T-cell (primary cell): ENCODE measurements at regions of chr2 and their contacts with region 1.

Region 1: GRCh38 chr2:195722075-195722474 is 65.0 kb downstream of the SLC39A10 start:
- DNase-seq: no peak
- ATAC-seq: no peak
- H3K4me3 ChIP-seq: no peak overlapping the region
- H3K4me3 Mint-ChIP-seq: no peak overlapping the region
- H3K27ac ChIP-seq: no peak overlapping the region
- H3K27ac Mint-ChIP-seq: no peak overlapping the region
- H3K4me1 ChIP-seq: no peaks in the 10 kb centered on the region
- H3K4me1 Mint-ChIP-seq: peaks cover 2 to 19% (median 3%) of the 10 kb centered on the region in 3 donors
- H3K27me3 ChIP-seq: no peaks in the 10 kb centered on the region
- H3K27me3 Mint-ChIP-seq: no peaks in the 10 kb centered on the region

Region 2: DNA sequence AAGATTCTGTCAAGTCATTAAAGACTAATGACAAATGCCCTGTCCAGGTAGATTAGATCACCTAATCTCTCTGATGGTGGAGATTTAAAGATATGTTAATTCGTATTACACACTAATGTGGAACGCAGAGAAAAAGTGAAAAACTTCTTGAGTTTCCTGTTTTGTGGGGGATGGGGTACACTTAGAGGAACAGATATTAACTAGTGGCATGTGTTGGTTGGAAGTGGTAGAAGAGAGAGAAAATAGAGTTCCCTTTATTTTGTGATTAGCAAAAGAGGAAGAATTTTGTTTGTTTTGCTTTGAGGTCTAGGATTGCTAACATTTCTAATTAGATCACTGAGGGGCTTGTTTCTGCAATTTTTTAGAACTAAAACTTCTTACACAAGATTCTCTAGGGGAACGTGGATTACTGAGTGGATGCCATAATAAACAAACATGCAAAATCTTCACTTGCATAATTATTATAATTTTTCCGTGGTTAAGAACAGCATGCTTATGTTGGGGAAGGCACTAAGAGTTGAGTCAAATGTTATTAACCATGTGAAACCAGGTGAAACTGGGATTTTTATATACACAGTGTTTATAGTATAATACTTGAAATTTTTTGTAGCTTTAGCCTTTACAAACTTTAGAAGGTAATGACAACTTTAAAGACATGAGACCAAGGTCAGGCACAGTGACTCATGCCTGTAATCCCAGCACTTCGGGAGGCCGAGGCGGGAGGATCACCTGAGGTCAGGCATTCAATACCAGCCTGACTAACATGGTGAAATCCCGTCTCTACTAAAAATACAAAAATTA is 546.7 kb after region 1 on chr2:
- CTCF ChIA-PET with region 1: no interaction called
- POLR2A ChIA-PET with region 1: interaction called in 1 of 2 experiments, 16 read pairs
- DNase-seq: peak in 1 of 35 experiments; percentile 38
- ATAC-seq: peak in 3 of 4 experiments; percentile 42 to 58 (median 48)
- H3K4me3 ChIP-seq: no peak overlapping the region
- H3K4me3 Mint-ChIP-seq: peak overlapping the region; percentile 70 to 75 (median 72)
- H3K27ac ChIP-seq: peak overlapping the region; percentile 50
- H3K27ac Mint-ChIP-seq: peak overlapping the region; percentile 91 to 94
- H3K4me1 ChIP-seq: peaks cover 14 to 55% of the 10 kb centered on the region in 2 experiments
- H3K4me1 Mint-ChIP-seq: peaks cover 62 to 79% (median 71%) of the 10 kb centered on the region in 3 donors
- H3K27me3 ChIP-seq: no peaks in the 10 kb centered on the region
- H3K27me3 Mint-ChIP-seq: no peaks in the 10 kb centered on the region